GM13977 (cell line): ENCODE measurements at regions of chr3 and their contacts with region 1.

Region 1: GRCh38 chr3:17831366-17831765 is 88.9 kb upstream of the TBC1D5 start:
- DNase-seq: no peak
- CTCF ChIP-seq: no peak

Region 2: GRCh38 chr3:17431004-17431403 is 400.4 kb before region 1 on chr3:
- in situ Hi-C with region 1: loop called (anchors 10 kb)
- DNase-seq: peak; percentile 19
- CTCF ChIP-seq: peak; percentile 48

Region 3: DNA sequence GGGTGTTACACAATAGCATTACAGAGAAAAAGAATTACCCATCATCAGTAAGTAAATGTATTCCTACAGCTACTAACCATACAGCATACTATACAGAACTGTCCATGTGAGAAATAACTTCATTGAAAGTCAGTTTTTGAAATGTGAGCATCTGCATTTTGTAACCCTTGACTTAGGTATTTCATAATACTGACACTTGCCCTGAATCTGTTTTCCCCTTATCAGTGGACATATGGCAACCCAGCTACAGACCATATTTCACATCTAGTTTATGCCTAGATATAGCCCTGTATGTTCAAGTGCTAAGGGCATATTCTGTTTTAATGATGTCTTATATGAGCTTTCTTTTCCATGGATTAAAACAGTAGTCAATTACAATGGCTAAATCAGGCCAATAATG is 386.5 kb before region 1 on chr3:
- in situ Hi-C with region 1: no loop called
- DNase-seq: no peak
- CTCF ChIP-seq: no peak

Region 4: GRCh38 chr3:18466136-18466535 is 634.8 kb after region 1 on chr3:
- in situ Hi-C with region 1: no loop called
- DNase-seq: no peak
- CTCF ChIP-seq: no peak